PC-9 (cell line): ENCODE measurements at regions of chr10 and their contacts with region 1.

Region 1: DNA sequence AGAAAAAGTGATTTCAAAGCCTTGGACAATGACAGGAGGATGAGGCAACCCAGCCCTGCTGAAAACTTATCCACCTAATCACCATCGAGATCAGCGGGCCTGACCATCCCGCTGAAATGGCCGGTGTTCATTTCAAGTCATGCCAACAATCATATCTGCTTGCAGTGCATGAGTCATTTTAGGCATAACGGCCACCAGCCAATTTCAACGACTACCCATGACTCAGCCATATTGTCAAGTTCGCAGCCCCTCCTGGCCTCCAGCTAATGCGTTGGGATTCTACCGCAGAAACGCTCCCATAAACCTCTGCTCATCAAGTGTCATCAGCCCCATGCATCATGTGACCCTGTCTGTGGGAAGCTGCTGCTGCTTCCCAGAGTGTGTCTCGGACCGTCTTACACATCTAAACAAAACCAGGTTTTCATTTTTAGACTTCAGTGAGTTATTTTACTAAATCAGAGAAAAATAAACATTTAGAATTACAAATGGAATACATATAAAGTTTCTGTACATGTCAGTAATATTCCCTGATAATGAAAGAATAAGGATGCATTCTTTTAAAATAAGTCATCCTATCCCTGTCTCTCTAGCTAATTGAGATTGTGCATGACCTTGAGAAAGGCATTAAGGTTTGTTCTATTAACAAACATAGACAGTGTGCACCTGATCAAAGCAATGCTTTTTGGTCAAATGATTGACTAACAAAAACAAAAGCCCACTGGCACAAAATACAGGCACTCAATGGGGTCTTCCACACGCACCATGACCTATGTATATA is 188.9 kb downstream of the ADAM12 start:
- DNase-seq: peak; percentile 72 to 75
- H3K4me3 ChIP-seq: no peak overlapping the region
- H3K27ac ChIP-seq: peak overlapping the region; percentile 79
- H3K4me1 ChIP-seq: peaks cover 35% of the 10 kb centered on the region
- H3K27me3 ChIP-seq: no peaks in the 10 kb centered on the region
- CTCF ChIP-seq: no peak

Region 2: GRCh38 chr10:126227762-126228134 is 28.3 kb after region 1 on chr10:
- CTCF ChIA-PET with region 1: no interaction called
- POLR2A ChIA-PET with region 1: no interaction called
- intact Hi-C with region 1: loop called (anchors 1 kb)
- DNase-seq: peak; percentile 40 to 43
- H3K4me3 ChIP-seq: no peak overlapping the region
- H3K27ac ChIP-seq: no peak overlapping the region
- H3K4me1 ChIP-seq: peaks cover 10% of the 10 kb centered on the region; the same call in 1 of the 2 replicates
- H3K27me3 ChIP-seq: no peaks in the 10 kb centered on the region
- CTCF ChIP-seq: no peak

Region 3: DNA sequence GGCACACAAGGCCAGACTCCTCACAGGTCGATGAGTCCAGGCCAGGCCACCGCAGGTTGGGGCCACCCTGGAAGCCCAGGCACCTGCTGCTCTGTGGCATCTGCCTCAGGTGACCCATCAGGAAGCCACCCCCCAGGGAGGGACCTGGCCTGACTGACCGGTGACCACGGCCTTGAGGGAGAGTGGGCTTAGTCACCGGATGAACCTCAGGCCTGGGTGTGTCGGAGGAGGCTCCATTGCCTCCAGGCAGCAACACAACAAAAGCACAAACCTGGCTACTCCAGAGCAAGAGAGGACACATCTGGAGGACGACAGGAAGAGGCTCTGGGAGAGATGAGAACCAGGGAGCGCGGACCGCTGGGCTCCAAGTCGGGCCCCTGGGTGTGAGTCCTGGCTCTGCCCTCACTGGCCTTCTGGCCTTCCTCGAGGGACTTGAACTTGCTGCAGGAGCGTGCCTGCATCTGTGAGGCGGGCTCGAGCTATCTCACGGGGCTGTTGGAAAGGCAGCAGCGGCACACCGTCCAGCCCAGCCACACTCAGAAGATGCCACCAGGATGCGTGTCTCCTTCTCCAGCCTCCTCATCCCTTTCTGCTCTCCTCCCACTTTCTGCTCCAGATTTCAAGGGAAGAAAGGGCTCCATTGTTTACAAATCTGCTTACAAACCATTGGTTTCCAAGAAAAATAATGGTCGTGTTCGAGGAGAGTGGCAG is 35.8 kb after region 1 on chr10:
- CTCF ChIA-PET with region 1: no interaction called
- POLR2A ChIA-PET with region 1: no interaction called
- intact Hi-C with region 1: loop called (anchors 2 kb)
- DNase-seq: peak; percentile 65 to 80
- H3K4me3 ChIP-seq: no peak overlapping the region
- H3K27ac ChIP-seq: no peak overlapping the region
- H3K4me1 ChIP-seq: peaks cover 14% of the 10 kb centered on the region
- H3K27me3 ChIP-seq: no peaks in the 10 kb centered on the region
- CTCF ChIP-seq: no peak

Region 4: DNA sequence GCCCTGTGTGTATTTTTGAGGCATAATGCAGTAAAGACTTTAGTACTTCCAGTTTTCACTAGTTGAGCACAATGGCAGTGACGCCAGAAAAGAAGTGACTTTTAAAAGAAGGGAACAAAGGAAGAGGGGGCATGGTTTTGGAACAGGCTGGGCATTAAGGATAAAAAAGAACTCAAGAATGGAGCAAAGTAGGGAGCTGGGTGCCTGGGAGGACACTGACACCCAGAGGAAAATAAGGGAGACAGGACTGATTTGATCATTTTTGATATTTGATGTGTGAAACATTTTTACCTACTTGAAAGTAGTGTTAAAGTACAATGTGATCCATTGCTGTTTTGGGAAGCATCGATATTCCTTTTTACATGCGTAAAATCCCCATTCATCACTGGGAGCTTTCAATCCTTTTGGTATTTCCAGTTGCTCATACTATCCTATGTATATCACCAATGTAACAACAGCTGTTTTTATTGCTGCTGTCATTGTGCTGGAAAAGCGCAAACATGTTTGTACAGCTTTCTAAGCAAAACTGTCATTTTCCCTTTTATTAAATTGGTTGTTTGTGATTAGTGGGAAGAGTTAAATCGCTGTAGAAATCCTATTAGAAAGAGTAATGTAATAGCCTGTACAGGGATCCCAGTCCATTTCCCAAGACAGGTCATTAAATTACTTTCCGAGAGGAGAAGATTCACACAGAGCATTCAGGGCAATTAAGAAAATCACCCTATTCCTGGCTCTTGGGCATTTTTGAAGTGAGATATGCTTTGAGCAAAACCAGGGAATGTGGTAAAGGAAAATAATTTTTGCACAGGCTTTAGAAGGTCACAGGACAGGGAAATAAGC is 103.6 kb after region 1 on chr10:
- CTCF ChIA-PET with region 1: no interaction called
- POLR2A ChIA-PET with region 1: no interaction called
- intact Hi-C with region 1: no loop called
- DNase-seq: no peak
- H3K4me3 ChIP-seq: no peak overlapping the region
- H3K27ac ChIP-seq: no peak overlapping the region
- H3K4me1 ChIP-seq: no peaks in the 10 kb centered on the region
- H3K27me3 ChIP-seq: no peaks in the 10 kb centered on the region
- CTCF ChIP-seq: no peak; the same call in 1 of the 2 replicates

Region 5: GRCh38 chr10:126964190-126964589 is 764.8 kb after region 1 on chr10:
- CTCF ChIA-PET with region 1: no interaction called
- POLR2A ChIA-PET with region 1: no interaction called
- intact Hi-C with region 1: no loop called
- DNase-seq: no peak
- H3K4me3 ChIP-seq: no peak overlapping the region
- H3K27ac ChIP-seq: no peak overlapping the region
- H3K4me1 ChIP-seq: no peaks in the 10 kb centered on the region
- H3K27me3 ChIP-seq: no peaks in the 10 kb centered on the region
- CTCF ChIP-seq: no peak